Endothelial cell of umbilical vein (primary cell): ENCODE measurements at regions of chr4 and their contacts with region 1.

Region 1: DNA sequence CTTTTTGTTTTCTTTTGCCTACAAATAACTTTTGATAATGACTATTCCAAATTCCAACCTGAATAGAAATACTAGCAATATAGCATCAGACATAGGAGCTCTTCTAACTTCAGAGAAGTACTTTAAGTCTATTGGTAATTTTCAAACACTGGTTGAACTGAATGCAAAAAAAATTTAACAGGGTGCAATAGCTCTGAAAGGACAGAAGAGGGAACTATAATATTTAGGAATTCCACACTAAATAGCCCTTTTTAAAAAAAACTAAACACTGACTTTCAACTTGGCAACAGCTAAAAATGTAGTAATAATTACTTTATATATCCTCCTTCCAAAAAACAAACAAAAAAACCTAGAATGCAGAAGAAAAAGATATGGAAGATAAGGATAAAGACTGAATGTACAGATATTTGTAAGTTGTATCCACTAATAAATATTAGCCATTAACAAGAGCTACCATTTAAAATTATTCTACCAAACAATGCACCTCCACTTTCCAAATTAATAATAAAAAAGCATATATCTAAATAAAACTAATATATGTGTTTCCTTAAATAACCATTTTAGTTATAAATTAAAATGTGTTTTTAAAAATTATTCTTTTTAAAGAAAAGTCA is 81.4 kb downstream of the FBXW7 start:
- DNase-seq: peak; percentile 38
- H3K4me3 ChIP-seq: no peak overlapping the region
- H3K27ac ChIP-seq: no peak overlapping the region
- H3K4me1 ChIP-seq: no peaks in the 10 kb centered on the region
- H3K27me3 ChIP-seq: no peaks in the 10 kb centered on the region
- CTCF ChIP-seq: peak; percentile 30 to 35
- POLR2A ChIP-seq: no peak

Region 2: DNA sequence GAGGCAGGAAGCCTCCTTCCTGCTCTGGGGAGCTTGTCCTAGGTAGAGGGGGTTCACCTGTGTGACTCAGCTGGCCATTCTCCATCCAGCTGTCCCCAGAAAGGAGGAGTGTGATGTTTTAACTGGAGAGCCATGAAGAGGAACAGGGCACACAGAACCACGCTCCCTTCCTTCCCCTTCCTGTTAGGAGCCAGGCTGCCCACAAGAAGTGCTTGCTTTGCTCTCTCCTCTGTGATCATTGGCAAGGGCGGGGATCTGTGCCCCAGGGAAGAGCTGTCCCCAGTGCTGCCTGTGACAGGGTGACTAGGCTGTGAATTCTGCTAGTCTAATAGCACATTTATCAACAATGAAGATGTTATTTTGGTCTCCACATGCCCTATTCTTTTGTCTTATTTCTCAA is 524.1 kb before region 1 on chr4:
- CTCF ChIA-PET with region 1: no interaction called
- POLR2A ChIA-PET with region 1: no interaction called
- dilution Hi-C with region 1: no loop called
- intact Hi-C with region 1: no loop called
- DNase-seq: no peak
- H3K4me3 ChIP-seq: no peak overlapping the region
- H3K27ac ChIP-seq: no peak overlapping the region
- H3K4me1 ChIP-seq: no peaks in the 10 kb centered on the region
- H3K27me3 ChIP-seq: no peaks in the 10 kb centered on the region
- CTCF ChIP-seq: no peak
- POLR2A ChIP-seq: no peak

Region 3: DNA sequence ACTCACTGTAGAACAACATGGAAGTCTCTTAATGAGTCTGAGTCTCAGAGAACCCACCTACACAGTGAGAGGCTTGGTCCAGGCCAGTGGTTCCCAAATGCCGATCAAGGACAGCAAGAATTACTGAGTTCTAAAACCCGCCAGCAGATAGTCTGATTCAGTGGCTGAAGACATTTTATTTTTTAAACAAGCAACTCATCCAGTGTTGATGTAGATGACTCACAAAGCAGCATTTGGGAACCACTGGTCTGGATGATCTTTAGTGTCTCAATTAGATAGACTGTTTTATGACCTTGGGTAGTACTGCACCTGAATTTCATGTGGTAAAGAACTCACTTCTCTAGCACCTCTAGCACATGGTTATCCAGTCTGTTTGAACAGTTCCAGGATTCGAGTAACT is 112.2 kb before region 1 on chr4:
- CTCF ChIA-PET with region 1: no interaction called
- POLR2A ChIA-PET with region 1: no interaction called
- dilution Hi-C with region 1: no loop called
- intact Hi-C with region 1: no loop called
- DNase-seq: no peak
- H3K4me3 ChIP-seq: no peak overlapping the region
- H3K27ac ChIP-seq: no peak overlapping the region
- H3K4me1 ChIP-seq: no peaks in the 10 kb centered on the region
- H3K27me3 ChIP-seq: no peaks in the 10 kb centered on the region
- CTCF ChIP-seq: no peak
- POLR2A ChIP-seq: no peak

Region 4: GRCh38 chr4:152485726-152486276 is 31.3 kb after region 1 on chr4:
- CTCF ChIA-PET with region 1: interaction called, 11 read pairs
- POLR2A ChIA-PET with region 1: no interaction called
- dilution Hi-C with region 1: no loop called
- intact Hi-C with region 1: no loop called
- DNase-seq: no peak
- H3K4me3 ChIP-seq: no peak overlapping the region
- H3K27ac ChIP-seq: no peak overlapping the region
- H3K4me1 ChIP-seq: no peaks in the 10 kb centered on the region
- H3K27me3 ChIP-seq: no peaks in the 10 kb centered on the region
- CTCF ChIP-seq: no peak
- POLR2A ChIP-seq: no peak

Region 5: DNA sequence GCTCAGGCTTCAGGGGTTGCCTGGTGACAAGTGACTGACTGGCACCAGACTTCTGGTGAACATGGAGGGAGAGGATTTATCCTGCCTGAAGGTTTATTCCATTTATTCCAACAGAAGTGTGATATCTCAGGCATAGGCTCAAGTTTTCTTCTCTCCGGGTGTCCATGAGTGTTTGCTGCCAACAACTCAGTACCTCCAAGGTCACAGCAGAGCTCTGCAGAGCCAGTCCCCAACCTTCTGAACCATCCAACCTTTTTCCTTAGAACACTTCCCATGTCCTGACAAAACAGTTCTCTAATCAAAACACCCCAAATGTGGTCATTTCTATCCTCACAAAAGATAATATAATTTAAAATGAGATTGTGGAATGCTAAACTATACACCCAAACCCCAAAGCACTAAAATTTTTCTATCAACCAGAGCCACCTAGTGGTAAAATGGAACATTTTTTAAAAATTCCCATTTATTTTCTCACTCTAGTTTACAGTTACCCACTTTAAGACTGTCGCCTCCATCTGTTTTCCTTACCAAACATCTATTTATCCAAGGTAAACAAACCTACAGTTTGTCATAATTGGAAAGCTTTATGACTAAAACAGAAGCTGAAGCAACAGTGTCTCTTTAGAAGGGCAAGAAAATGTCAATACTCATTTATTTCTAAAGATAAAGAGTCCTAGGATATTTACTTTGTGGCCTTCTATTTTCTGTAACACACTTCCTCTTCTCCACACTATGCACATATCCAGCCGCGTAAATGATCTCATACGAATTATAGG is 185.7 kb after region 1 on chr4:
- CTCF ChIA-PET with region 1: interaction called, 44 read pairs
- POLR2A ChIA-PET with region 1: no interaction called
- dilution Hi-C with region 1: no loop called
- intact Hi-C with region 1: loop called (anchors 1 kb)
- DNase-seq: peak; percentile 30
- H3K4me3 ChIP-seq: no peak overlapping the region
- H3K27ac ChIP-seq: no peak overlapping the region
- H3K4me1 ChIP-seq: no peaks in the 10 kb centered on the region
- H3K27me3 ChIP-seq: no peaks in the 10 kb centered on the region
- CTCF ChIP-seq: peak in 1 of 2 donors; percentile 29
- POLR2A ChIP-seq: no peak

Region 6: GRCh38 chr4:152735396-152735859 is 280.9 kb after region 1 on chr4:
- CTCF ChIA-PET with region 1: interaction called, 40 read pairs
- POLR2A ChIA-PET with region 1: no interaction called
- dilution Hi-C with region 1: no loop called
- intact Hi-C with region 1: loop called (anchors 1 kb)
- DNase-seq: peak; percentile 41
- H3K4me3 ChIP-seq: no peak overlapping the region
- H3K27ac ChIP-seq: no peak overlapping the region
- H3K4me1 ChIP-seq: no peaks in the 10 kb centered on the region
- H3K27me3 ChIP-seq: peaks cover 4 to 5% of the 10 kb centered on the region in 2 experiments
- CTCF ChIP-seq: peak; percentile 30 to 36
- POLR2A ChIP-seq: no peak